Breast epithelium (tissue), 4 donors: ENCODE measurements at regions of chr19 and their contacts with region 1.

Region 1: GRCh38 chr19:6540918-6541689 is 10.3 kb downstream of the TNFSF9 start:
- DNase-seq: no peak
- H3K4me3 ChIP-seq: no peak overlapping the region
- H3K27ac ChIP-seq: no peak overlapping the region
- H3K4me1 ChIP-seq: no peaks in the 10 kb centered on the region
- H3K27me3 ChIP-seq: no peaks in the 10 kb centered on the region
- CTCF ChIP-seq: no peak
- POLR2A ChIP-seq: no peak

Region 2: DNA sequence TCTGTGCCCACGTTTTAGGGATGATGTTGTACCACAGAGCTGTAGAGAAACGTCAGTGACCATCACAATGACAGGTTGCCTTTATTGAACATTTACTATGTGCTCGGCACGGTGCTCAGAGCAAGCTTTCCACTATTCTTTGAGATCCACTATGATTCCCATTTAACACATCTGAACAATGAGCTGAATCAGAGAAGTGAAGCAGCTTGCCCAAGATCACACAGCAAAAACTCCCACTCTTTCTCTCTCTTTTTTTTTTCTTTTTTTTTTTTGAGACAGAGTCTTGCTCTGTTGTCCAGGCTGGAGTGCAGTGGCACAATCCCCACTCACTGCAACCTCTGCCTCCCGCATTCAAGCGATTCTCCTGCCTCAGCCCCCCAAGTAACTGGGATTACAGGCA is 18.4 kb before region 1 on chr19:
- intact Hi-C with region 1: loop called (anchors 1 kb)
- DNase-seq: no peak
- H3K4me3 ChIP-seq: no peak overlapping the region
- H3K27ac ChIP-seq: no peak overlapping the region
- H3K4me1 ChIP-seq: no peaks in the 10 kb centered on the region
- H3K27me3 ChIP-seq: no peaks in the 10 kb centered on the region
- CTCF ChIP-seq: no peak
- POLR2A ChIP-seq: no peak